Prostate gland (tissue), 2 donors: ENCODE measurements at regions of chr4 and their contacts with region 1.

Region 1: GRCh38 chr4:2220016-2220630 is 21.8 kb downstream of the HAUS3 start:
- DNase-seq: peak; percentile 72
- H3K4me3 ChIP-seq: no peak overlapping the region
- H3K27ac ChIP-seq: no peak overlapping the region
- H3K4me1 ChIP-seq: no peaks in the 10 kb centered on the region
- H3K27me3 ChIP-seq: no peaks in the 10 kb centered on the region
- CTCF ChIP-seq: peak; percentile 54 to 84 (median 82)
- POLR2A ChIP-seq: no peak

Region 2: DNA sequence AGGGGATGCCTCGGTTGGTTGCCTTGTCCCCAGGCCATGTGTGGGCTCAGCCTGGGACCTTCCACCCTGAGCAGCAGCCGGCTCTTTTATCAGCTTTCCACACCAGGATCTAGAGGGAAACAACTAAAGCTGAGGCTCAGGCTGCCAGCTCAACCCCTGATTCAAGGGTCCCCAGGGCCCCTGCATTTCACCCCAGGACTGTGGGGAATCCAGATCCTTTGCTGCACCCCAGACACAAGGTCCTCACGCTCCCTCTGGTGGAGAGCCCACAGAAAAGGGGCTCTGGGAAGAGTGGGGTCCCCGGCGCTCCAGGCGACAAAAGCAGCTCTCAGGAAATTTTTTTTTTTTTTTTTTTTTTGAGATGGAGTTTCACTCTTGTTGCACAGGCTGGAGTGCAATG is 134.0 kb after region 1 on chr4:
- intact Hi-C with region 1: loop called (anchors 5 kb)
- DNase-seq: no peak
- H3K4me3 ChIP-seq: no peak overlapping the region
- H3K27ac ChIP-seq: no peak overlapping the region
- H3K4me1 ChIP-seq: no peaks in the 10 kb centered on the region
- H3K27me3 ChIP-seq: no peaks in the 10 kb centered on the region
- CTCF ChIP-seq: peak in 1 of 4 experiments; percentile 15
- POLR2A ChIP-seq: no peak

Region 3: DNA sequence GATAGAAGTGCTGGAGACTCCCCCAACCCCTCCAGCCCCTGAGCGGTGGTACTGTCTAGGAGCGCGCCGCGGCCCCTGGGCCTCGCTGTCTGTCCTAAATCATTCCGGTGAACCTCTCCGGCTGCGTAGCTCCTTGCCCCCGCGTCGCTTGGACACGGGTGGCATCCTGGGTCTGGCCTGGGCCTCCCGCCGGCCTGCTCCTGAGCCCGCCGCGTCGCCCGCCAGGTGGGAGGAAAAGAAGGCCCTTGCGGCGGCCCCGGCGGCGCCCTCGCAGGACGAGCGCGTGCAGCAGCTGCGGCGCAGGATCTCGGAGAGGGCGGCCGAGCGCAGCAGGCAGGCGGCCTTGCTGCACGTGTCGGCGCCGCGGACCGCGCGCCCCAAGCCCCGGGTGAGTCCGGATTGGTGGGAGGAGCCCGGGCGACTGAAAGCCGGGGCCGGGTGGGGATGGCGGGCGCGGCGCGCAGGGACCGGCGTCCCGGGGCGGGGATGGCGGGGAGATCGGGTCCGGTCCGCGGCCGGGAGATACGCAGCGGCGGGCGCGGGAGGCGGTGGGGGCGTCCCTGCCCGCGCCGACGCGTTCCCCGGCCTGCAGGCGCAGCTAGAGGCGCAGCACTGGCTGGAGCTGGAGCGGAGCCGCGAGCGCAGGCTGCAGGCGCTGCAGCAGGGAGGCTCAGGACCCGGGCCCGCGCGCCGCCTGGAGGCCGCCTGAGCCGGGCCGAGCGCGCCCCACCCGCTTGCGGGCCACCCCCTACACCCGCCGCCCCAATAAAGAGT is 242.3 kb after region 1 on chr4:
- intact Hi-C with region 1: loop called (anchors 5 kb)
- DNase-seq: peak; percentile 42
- H3K4me3 ChIP-seq: peak overlapping the region; percentile 45 to 52
- H3K27ac ChIP-seq: peak overlapping the region in 1 of 2 donors; percentile 48
- H3K4me1 ChIP-seq: no peaks in the 10 kb centered on the region
- H3K27me3 ChIP-seq: no peaks in the 10 kb centered on the region
- CTCF ChIP-seq: peak in 3 of 4 experiments; percentile 44 to 67 (median 65)
- POLR2A ChIP-seq: no peak